Transverse colon (tissue), 4 donors: ENCODE measurements at regions of chr9 and their contacts with region 1.

Region 1: GRCh38 chr9:83081010-83081690 is 18.2 kb upstream of the RASEF start:
- DNase-seq: no peak
- H3K4me3 ChIP-seq: no peak overlapping the region
- H3K27ac ChIP-seq: no peak overlapping the region
- H3K4me1 ChIP-seq: no peaks in the 10 kb centered on the region
- H3K27me3 ChIP-seq: no peaks in the 10 kb centered on the region
- CTCF ChIP-seq: no peak
- EP300 ChIP-seq: no peak
- POLR2A ChIP-seq: no peak

Region 2: GRCh38 chr9:83023151-83023550 is 58.0 kb before region 1 on chr9:
- in situ Hi-C with region 1: no loop called
- intact Hi-C with region 1: loop called (anchors 2 kb)
- DNase-seq: no peak
- H3K4me3 ChIP-seq: no peak overlapping the region
- H3K27ac ChIP-seq: no peak overlapping the region
- H3K4me1 ChIP-seq: peaks cover 0 to 2% (median under 1%) of the 10 kb centered on the region in 4 donors
- H3K27me3 ChIP-seq: no peaks in the 10 kb centered on the region
- CTCF ChIP-seq: no peak
- EP300 ChIP-seq: no peak
- POLR2A ChIP-seq: no peak

Region 3: DNA sequence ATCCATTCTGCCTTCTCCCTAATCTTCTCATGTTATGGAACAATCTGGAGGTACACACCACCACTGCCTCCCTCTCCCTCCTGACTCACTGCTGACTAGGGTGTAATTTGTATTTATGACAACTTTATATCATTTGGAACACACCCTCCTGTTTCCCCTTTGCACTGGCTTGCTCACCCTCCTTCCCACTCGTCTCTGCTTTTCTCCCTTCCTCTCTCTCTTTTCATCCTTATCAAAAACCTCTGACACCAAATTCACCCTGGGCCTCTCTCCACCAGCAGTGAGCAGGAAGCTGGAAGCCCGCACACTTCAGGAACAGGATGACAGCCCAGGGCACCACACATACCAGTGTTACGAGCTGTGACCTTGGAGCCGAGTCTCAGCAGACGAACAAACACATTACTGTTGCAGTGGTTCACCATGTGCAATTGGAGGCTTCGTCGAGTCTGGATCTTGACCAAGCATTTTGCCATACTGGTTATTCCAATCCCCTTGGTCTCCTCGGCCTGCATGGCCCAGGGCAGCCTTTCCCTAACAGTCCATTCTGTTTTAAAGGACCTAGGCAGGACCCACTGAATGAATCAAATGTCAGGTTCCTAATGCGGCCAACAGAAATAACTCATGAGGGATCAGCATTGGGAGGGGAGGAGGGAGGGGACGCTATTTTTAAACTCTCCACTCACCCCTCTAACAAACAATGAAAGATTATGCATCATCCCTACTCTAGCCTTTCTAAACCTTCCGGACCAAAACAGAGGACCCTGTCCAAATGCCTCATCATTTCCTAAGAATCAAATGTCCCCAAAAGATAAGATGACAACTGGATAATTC is 185.7 kb after region 1 on chr9:
- in situ Hi-C with region 1: no loop called
- intact Hi-C with region 1: no loop called
- DNase-seq: no peak
- H3K4me3 ChIP-seq: no peak overlapping the region
- H3K27ac ChIP-seq: no peak overlapping the region
- H3K4me1 ChIP-seq: peaks cover 0 to 8% (median 2%) of the 10 kb centered on the region in 4 donors
- H3K27me3 ChIP-seq: no peaks in the 10 kb centered on the region
- CTCF ChIP-seq: no peak
- EP300 ChIP-seq: no peak
- POLR2A ChIP-seq: no peak